Activated T-helper 2 cell treated with anti-CD3 and anti-CD28 coated beads, Interferon-gamma antibody, Interleukin-2, Interleukin-4, amounts not matched to agents 10 μg/mL and 5 μg/mL and 100 μg/mL, durations not matched to agents 14 hours and 24 hours and 36 hours (primary cell): ENCODE measurements at regions of chr2 and their contacts with region 1.

Region 1: GRCh38 chr2:66429071-66429477 is 5.9 kb upstream of the MEIS1 start:
- DNase-seq: no peak
- H3K4me3 Mint-ChIP-seq: no peak overlapping the region
- H3K27ac Mint-ChIP-seq: no peak overlapping the region
- H3K4me1 Mint-ChIP-seq: peaks cover 6% of the 10 kb centered on the region
- H3K27me3 Mint-ChIP-seq: peaks cover 77% of the 10 kb centered on the region

Region 2: GRCh38 chr2:66445925-66446860 is 17.1 kb after region 1 on chr2:
- intact Hi-C with region 1: loop called (anchors 2 kb)
- DNase-seq: no peak
- H3K4me3 Mint-ChIP-seq: no peak overlapping the region
- H3K27ac Mint-ChIP-seq: no peak overlapping the region
- H3K4me1 Mint-ChIP-seq: no peaks in the 10 kb centered on the region
- H3K27me3 Mint-ChIP-seq: peaks cover 35% of the 10 kb centered on the region

Region 3: DNA sequence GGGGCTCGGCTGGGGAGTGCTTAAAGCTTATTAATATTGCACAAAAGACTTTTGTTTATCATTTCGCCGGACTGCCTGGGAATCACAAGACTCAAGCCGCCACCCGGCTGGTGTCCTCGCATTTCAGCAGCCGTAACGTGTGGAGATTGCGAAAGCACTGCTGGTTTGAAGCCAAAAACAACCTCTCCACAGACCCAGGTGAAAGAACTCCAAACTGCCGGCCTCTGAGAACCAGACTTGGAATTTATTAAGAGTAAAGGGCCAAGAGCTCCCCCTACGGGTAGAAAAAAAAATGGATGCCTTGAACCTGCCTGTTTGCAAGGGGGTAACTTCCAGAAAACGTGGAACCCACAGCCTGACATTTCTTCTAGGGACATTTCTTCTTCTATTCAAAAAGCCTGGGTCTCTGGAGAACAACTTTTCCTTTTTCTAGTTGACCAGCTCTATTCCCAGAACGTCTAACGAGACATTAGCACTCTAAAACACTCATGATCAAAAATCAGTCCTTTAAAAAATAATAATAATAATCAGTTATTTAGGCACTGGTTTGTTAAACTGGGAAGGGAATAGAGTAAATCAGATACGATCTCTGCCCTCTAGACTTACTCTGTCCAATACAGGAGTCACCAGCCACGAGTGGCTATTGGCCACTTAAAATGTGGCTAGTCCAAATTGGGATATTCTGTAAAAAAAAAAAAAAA is 1417.4 kb after region 1 on chr2:
- intact Hi-C with region 1: loop called (anchors 5 kb)
- DNase-seq: peak; percentile 8
- H3K4me3 Mint-ChIP-seq: no peak overlapping the region
- H3K27ac Mint-ChIP-seq: no peak overlapping the region
- H3K4me1 Mint-ChIP-seq: no peaks in the 10 kb centered on the region
- H3K27me3 Mint-ChIP-seq: peaks cover 4% of the 10 kb centered on the region